Activated naive CD4-positive, alpha-beta T cell treated with anti-CD3 and anti-CD28 coated beads for 36 hours (primary cell): ENCODE measurements at regions of chr20 and their contacts with region 1.

Region 1: GRCh38 chr20:33097001-33097400 is 17.6 kb downstream of the BPIFB4 start:
- DNase-seq: no peak
- H3K4me3 Mint-ChIP-seq: no peak overlapping the region
- H3K27ac Mint-ChIP-seq: no peak overlapping the region
- H3K4me1 Mint-ChIP-seq: peaks cover 2% of the 10 kb centered on the region
- H3K27me3 Mint-ChIP-seq: no peaks in the 10 kb centered on the region

Region 2: GRCh38 chr20:33037456-33037855 is 59.5 kb before region 1 on chr20:
- CTCF ChIA-PET with region 1: no interaction called
- intact Hi-C with region 1: no loop called
- DNase-seq: no peak
- H3K4me3 Mint-ChIP-seq: no peak overlapping the region
- H3K27ac Mint-ChIP-seq: no peak overlapping the region
- H3K4me1 Mint-ChIP-seq: no peaks in the 10 kb centered on the region
- H3K27me3 Mint-ChIP-seq: no peaks in the 10 kb centered on the region

Region 3: GRCh38 chr20:33291830-33292355 is 194.9 kb after region 1 on chr20:
- CTCF ChIA-PET with region 1: interaction called, 8 read pairs
- intact Hi-C with region 1: loop called (anchors 1 kb)
- DNase-seq: peak; percentile 75
- H3K4me3 Mint-ChIP-seq: no peak overlapping the region
- H3K27ac Mint-ChIP-seq: no peak overlapping the region
- H3K4me1 Mint-ChIP-seq: no peaks in the 10 kb centered on the region
- H3K27me3 Mint-ChIP-seq: no peaks in the 10 kb centered on the region

Region 4: DNA sequence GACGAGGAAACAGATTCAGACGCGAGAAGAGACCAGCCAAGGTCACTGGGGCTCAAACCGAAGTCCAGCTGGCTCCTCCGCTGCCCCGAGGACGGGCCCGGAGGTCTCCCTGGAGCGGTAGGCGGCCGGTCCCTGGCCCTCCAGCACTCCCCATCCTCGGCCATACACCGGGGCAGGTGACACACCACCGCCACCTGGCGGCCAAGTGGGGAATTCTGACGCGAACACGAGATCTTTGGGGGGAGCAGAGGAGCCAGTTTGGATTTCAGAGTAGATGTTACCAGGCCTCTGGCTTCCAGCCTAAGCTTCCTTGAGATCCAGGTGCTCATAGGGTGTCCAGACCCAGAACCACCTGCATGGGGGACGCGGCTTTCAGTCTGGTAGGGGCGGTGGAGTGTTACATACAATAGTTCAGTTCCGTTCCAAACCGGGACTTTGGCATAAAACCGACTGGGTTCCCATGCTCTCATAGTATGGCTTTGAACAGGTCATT is 202.2 kb after region 1 on chr20:
- CTCF ChIA-PET with region 1: interaction called, 8 read pairs
- intact Hi-C with region 1: loop called (anchors 2 kb)
- DNase-seq: peak; percentile 76
- H3K4me3 Mint-ChIP-seq: no peak overlapping the region
- H3K27ac Mint-ChIP-seq: no peak overlapping the region
- H3K4me1 Mint-ChIP-seq: peaks cover 2% of the 10 kb centered on the region
- H3K27me3 Mint-ChIP-seq: peaks cover 1% of the 10 kb centered on the region